ENCODE measurements at regions of chr1 and their contacts with region 1.

Region 1: GRCh38 chr1:202926720-202927491 is at the start of gene KLHL12:
- DNase-seq: peak; percentile 93 to 99 (median 96)
- H3K4me3 ChIP-seq: peak within 1 kb of the TSS; percentile 55 to 99 (median 93)
- H3K27ac ChIP-seq: peak within 1 kb of the TSS; percentile 78 to 98 (median 95)
- H3K27me3 ChIP-seq: no peaks in the 10 kb centered on the region
- CTCF ChIP-seq: peak in 54 of 56 donors; percentile 13 to 62 (median 45)
- total RNA-seq, gene KLHL12: 22.3 to 47.0 (median 36.2) TPM

Region 2: GRCh38 chr1:202796302-202797069 is 130.4 kb before region 1 on chr1:
- intact Hi-C with region 1: no loop called
- DNase-seq: no peak
- H3K4me3 ChIP-seq: no peak overlapping the region
- H3K27ac ChIP-seq: no peak overlapping the region
- H3K27me3 ChIP-seq: no peaks in the 10 kb centered on the region
- CTCF ChIP-seq: no peak

Region 3: DNA sequence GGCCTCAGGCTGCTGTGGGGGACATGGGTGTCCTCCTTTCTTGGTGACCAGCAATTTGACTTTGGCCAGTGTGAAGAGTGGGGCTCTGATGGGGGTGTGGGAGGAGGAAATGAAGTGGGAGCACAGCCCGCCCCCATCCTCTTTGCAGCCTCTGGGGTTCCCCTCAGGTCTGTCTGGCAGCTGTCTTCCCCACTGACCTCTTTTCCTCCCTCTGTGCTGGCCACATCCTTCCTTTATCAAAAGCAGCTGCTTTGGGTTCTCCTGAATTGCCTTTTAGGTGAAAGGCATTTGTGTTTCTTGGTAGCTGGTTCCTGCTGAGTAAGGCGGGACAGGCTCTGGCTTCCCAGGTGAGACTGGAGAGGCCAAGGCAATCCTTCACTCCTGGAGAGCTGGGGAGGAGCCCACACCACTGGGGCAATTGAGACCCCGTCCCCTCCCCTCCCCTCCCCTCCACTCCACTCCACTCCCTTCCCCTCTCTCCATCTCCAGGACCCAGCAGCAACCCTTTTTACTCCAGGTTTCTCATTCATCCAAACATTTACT is 91.3 kb before region 1 on chr1:
- intact Hi-C with region 1: no loop called
- DNase-seq: no peak
- H3K4me3 ChIP-seq: no peak overlapping the region
- H3K27ac ChIP-seq: peak overlapping the region in 3 of 59 donors; percentile 3 to 52 (median 14)
- H3K27me3 ChIP-seq: no peaks in the 10 kb centered on the region
- CTCF ChIP-seq: no peak

Region 4: GRCh38 chr1:203006948-203007871 is 80.3 kb after region 1 on chr1 and contains the start of gene TMEM183A:
- intact Hi-C with region 1: loop called in 1 of 2 experiments (anchors 5 kb)
- DNase-seq: peak; percentile 94 to 98 (median 96)
- H3K4me3 ChIP-seq: peak within 1 kb of the TSS; percentile 59 to 98 (median 87)
- H3K27ac ChIP-seq: peak within 1 kb of the TSS in 58 of 59 donors; percentile 7 to 97 (median 82)
- H3K27me3 ChIP-seq: no peaks in the 10 kb centered on the region
- CTCF ChIP-seq: peak in 12 of 56 donors; percentile 9 to 45 (median 24)
- total RNA-seq, gene TMEM183A: 37.4 to 106 (median 77.4) TPM

Region 5: GRCh38 chr1:203017692-203018091 is 90.8 kb after region 1 on chr1:
- intact Hi-C with region 1: no loop called
- DNase-seq: no peak
- H3K4me3 ChIP-seq: no peak overlapping the region
- H3K27ac ChIP-seq: no peak overlapping the region
- H3K27me3 ChIP-seq: no peaks in the 10 kb centered on the region
- CTCF ChIP-seq: no peak

Region 6: DNA sequence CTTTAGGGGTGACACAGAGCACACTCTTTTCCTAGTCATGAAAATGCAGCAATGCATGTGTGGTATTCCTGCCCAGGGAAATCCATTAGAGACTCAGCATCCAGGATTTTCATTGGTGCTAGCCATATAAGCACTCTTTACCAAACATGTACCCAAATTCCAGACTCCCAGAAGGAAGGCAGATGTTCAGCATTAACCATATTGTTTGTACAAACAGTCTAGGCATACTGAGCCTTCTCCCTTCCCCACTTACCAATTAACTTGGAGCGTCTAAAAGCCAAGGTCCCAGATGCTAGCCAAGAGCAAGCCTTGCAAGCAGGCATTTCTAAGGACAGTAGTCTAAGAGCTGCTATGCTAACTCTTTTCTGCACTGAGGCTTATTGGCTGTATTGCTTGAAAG is 896.4 kb after region 1 on chr1:
- intact Hi-C with region 1: no loop called
- DNase-seq: no peak
- H3K4me3 ChIP-seq: no peak overlapping the region
- H3K27ac ChIP-seq: no peak overlapping the region
- H3K27me3 ChIP-seq: no peaks in the 10 kb centered on the region
- CTCF ChIP-seq: no peak

Measured in dorsolateral prefrontal cortex (tissue), 120 donors.